ENCODE measurements at regions of chrX and their contacts with region 1.

Region 1: GRCh38 chrX:154490414-154491083 is at the start of gene SLC10A3:
- DNase-seq: peak; percentile 96

Region 2: GRCh38 chrX:154397819-154398724 is 92.5 kb before region 1 on chrX and contains the start of gene RPL10:
- CTCF ChIA-PET with region 1: interaction called, 4 read pairs
- POLR2A ChIA-PET with region 1: interaction called, 19 read pairs
- DNase-seq: peak; percentile 97

Region 3: DNA sequence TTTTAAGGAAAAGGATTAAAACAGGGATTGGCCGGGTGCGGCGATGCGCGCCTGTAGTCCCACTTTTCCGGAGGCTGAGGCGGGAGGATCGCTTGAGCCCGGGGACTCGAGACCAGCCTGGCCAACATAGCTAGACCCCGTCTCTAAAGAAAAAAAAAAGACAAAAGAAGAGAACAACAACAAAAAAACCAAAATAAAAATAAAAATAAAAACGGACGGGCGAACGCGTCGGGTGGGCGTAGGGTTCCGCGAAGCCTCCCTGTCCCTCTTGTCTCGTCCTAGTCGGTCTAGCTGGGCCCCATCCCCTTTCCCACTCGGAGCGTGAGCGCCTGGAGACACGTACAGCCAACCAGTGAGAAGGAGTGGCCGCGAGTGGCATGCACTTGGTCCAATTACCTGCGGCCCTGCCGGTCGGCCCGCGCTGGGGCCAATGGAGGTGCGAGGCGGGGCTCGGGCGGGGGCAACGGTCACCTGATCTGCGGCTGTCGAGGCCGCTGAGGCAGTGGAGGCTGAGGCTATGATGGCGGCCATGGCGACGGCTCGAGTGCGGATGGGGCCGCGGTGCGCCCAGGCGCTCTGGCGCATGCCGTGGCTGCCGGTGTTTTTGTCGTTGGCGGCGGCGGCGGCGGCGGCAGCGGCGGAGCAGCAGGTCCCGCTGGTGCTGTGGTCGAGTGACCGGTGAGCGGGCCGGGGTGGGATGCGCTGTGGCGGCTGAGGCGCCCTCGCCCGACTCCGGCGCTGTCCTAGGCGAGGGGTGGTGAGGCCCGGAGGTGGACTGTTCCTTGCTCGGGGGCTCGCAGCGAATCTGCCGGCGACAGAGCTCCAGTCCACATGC is 62.2 kb before region 1 on chrX and contains the start of gene ATP6AP1:
- CTCF ChIA-PET with region 1: interaction called, 4 read pairs
- POLR2A ChIA-PET with region 1: interaction called, 13 read pairs
- DNase-seq: peak; percentile 95

Region 4: DNA sequence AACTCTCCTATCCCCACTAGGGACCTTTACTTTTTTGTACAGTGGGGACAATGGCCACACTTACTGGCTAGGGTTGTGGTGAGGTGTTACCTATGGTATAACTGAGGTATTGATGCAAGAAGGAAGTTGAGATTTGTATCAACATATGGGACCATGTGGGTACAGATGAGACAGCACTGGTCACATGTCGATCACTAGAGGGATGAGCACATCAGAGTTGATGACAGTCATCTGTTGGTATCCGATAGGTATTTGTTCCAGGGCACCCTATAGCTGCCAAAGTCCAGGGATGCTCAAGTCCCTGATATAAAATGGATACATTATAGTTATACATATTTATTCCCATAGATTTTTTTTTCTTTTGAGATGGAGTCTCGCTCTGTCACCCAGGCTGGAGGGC is 12.4 kb after region 1 on chrX:
- CTCF ChIA-PET with region 1: no interaction called
- POLR2A ChIA-PET with region 1: interaction called, 18 read pairs
- DNase-seq: no peak

Region 5: DNA sequence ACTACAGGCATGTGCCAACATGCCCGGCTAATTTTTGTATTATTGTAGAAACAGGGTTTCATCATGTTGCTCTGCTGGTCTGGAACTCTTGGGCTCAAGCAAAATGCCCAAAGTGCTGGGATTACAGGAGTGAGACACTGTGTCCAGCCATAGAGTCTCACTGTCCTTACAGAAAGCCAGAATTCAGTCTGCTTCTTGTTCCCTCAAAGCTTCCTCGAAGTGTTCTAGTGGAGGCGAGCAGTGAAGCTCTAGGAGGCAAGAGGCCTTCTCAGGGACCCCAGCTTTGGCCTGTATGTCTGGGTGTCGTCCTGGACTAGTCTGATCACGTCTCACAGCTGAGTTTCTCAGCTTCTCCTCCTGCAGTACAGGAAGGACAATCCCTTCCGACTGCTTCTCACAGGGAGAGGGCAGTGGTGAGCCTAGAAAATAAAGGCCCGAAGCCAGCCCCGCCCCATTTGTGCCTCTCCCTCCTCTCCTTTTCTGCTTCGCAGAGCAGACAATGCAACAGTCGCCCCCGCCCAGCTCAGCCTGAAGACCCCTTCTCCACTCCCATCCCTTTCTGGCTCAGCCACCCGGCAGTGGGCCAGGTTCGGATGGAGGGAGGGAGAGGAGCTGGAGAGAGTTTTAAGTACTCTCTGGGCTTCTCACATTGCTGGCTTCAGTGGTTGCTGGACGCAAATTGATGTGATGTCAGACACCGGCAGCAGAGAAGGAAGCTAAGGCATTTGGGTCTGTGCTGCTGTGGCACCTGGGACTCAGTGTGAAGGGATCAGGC is 36.5 kb after region 1 on chrX:
- CTCF ChIA-PET with region 1: no interaction called
- POLR2A ChIA-PET with region 1: interaction called, 13 read pairs
- DNase-seq: peak; percentile 78